Activated CD4-positive, alpha-beta memory T cell treated with anti-CD3 and anti-CD28 coated beads for 36 hours (primary cell): ENCODE measurements at regions of chr18 and their contacts with region 1.

Region 1: DNA sequence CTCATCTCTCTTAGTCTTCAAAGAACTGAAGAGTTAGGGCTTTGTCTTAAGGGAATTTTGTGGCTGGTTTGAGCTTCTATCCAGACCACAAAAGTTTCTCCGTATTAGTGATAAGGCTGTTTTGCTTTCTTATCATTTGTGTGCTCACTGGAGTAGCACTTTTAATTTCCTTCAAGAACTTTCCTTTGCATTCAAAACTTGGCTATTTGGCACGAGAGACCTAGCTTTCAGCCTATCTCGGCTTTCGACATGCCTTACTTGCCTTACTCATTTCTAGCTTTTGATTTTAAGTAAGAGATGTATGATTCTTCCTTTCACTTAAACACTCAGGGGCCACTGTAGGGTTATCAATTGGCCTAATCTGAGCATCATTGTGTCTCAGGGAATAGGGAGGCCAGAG is 29.9 kb downstream of the HDHD2 start:
- DNase-seq: peak; percentile 37
- H3K4me3 Mint-ChIP-seq: no peak overlapping the region
- H3K27ac Mint-ChIP-seq: peak overlapping the region; percentile 40
- H3K4me1 Mint-ChIP-seq: peaks cover 26% of the 10 kb centered on the region
- H3K27me3 Mint-ChIP-seq: no peaks in the 10 kb centered on the region

Region 2: GRCh38 chr18:47109720-47110119 is 10.7 kb before region 1 on chr18:
- CTCF ChIA-PET with region 1: no interaction called
- POLR2A ChIA-PET with region 1: no interaction called
- intact Hi-C with region 1: no loop called
- DNase-seq: no peak
- H3K4me3 Mint-ChIP-seq: no peak overlapping the region
- H3K27ac Mint-ChIP-seq: no peak overlapping the region
- H3K4me1 Mint-ChIP-seq: no peaks in the 10 kb centered on the region
- H3K27me3 Mint-ChIP-seq: no peaks in the 10 kb centered on the region

Region 3: DNA sequence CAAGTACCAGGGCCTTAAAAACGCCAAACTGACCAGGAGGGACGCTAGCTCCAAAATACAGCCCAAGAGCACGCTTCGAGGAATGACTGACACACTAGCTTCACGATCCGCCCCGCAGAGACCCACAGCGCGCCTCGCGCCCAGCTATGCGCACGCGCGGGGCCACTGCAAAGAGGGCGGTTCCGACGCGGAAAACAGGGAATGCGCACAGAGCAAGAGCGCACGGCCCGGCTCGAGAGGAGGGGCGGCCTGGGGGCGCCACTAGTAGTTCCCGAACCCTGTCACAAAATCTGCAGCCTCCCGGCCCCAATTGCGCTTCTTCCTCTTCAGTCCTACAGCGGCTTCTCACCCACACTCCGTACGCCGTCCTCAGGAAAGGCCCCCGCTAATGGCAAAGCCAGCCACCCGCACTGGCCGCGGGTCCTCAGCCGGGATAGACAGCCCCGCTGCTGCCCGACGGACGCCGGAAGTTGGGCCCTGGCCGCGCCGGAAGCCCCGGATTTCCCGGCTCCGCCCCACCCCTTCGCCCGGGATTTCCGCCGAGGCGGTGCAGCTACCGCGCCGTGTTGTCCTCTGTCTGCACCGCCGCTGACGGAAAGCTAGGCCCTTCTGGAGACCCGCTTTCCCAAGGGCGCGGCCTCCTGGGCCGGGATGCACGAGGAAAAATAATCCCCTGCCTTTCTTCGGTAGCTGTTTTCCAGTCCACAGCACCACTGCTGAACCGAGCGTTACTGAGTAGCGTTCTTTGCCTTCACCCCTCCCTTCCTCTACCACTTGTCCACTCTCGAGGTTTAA is 29.8 kb after region 1 on chr18 and contains the start of gene HDHD2:
- CTCF ChIA-PET with region 1: interaction called, 12 read pairs
- POLR2A ChIA-PET with region 1: interaction called, 8 read pairs
- intact Hi-C with region 1: loop called (anchors 1 kb)
- DNase-seq: peak; percentile 88
- H3K4me3 Mint-ChIP-seq: peak within 1 kb of the TSS; percentile 89
- H3K27ac Mint-ChIP-seq: peak within 1 kb of the TSS; percentile 91
- H3K4me1 Mint-ChIP-seq: peaks cover 33% of the 10 kb centered on the region
- H3K27me3 Mint-ChIP-seq: no peaks in the 10 kb centered on the region
- total RNA-seq, gene HDHD2: 26.4 to 32.9 TPM

Region 4: DNA sequence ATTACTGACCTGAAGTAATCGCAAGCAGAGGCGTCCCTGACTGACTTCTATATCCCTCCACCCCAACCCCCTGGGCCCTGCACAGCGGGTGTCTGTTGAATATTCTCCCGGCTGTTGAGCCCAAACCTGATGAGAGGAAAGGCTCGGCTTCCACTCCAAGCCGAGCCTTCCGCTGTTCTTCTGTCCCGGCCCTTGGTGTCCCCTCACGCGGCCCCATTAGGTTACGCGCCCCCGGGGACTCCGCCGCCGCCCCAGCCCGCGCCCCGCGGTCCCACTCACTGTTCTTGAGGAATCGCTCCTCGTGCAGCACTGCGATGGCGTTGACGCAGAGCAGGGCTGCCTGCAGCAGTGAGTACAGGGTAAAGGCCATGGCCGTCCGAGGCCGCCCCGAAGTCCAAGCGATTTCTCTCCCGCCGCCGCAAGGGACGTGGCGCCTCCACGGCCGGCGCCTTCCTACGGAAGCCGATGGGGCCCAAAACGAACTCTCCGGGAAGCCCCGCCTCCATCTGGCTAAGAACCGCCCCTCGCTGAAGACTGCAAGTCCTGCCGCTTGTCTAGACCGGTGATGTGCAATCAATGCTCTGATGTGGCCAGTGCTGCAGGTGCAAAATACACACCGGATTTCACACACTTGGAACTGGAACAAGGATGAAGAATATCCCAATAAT is 55.6 kb after region 1 on chr18 and contains the start of gene IER3IP1:
- CTCF ChIA-PET with region 1: no interaction called
- POLR2A ChIA-PET with region 1: interaction called, 4 read pairs
- intact Hi-C with region 1: loop called (anchors 2 kb)
- DNase-seq: peak; percentile 94
- H3K4me3 Mint-ChIP-seq: no peak within 1 kb of the TSS
- H3K27ac Mint-ChIP-seq: peak within 1 kb of the TSS; percentile 66
- H3K4me1 Mint-ChIP-seq: peaks cover 2% of the 10 kb centered on the region
- H3K27me3 Mint-ChIP-seq: no peaks in the 10 kb centered on the region
- total RNA-seq, gene IER3IP1: 10.9 to 11.0 TPM